K562 (cell line): ENCODE measurements at regions of chr1 and their contacts with region 1.

Region 1: DNA sequence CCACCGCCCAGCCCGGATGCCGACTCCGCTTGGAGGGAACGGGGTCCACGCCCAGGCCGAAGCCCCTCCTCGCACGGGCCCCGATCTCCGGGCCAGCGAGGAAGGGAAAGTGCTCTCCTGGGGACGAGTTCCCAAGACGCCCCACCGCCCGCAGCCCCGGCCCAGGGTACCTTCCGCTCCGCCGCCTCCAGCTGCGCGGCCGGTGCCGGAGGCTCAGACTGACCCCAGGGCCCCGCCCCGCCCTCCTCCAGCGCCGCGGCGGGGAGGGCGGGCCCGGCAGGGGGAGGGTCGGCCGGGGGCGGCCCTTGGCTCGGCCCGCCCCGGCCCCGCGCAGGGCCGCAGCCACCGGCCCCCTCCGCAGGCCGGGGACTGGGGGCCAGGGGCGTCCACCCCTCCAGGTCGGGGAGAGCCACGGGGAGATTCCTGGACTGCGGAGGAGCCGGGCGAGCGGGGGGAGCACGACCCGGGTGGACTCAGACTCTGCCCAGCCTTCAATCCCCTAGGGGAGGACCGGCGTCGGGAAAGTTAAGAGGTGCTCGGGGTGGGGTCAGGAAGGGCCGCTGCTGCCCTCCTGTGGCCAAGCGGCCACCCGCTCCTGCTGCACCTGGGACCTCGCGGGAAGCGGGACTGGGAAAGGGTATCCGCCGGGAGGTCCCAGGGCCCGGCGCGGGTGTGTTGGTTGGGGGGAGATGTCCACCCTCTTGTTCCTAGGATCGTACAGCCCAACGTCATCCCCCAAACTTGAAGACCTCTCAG is at the start of gene RHOC:
- DNase-seq: peak; percentile 90 to 96 (median 94)
- ATAC-seq: peak; percentile 83
- H3K4me3 ChIP-seq: peak within 1 kb of the TSS; percentile 94
- H3K27ac ChIP-seq: peak within 1 kb of the TSS; percentile 97
- H3K4me1 ChIP-seq: peaks cover 44 to 47% of the 10 kb centered on the region in 2 experiments
- H3K27me3 ChIP-seq: no peaks in the 10 kb centered on the region
- CTCF ChIP-seq: peak; percentile 96 to 97 (median 96)
- EP300 ChIP-seq: peak; percentile 29; the same call in 1 of the 2 replicates
- POLR2A ChIP-seq: peak; percentile 76
- RAD21 ChIP-seq: peak; percentile 98 to 99
- polyA plus RNA-seq, gene RHOC: 35.2 to 82.7 TPM

Region 2: GRCh38 chr1:112466078-112466660 is 240.9 kb before region 1 on chr1:
- CTCF ChIA-PET with region 1: no interaction called
- POLR2A ChIA-PET with region 1: no interaction called
- in situ Hi-C with region 1: no loop called
- intact Hi-C with region 1: loop called (anchors 10 kb)
- DNase-seq: peak; percentile 85 to 94 (median 92)
- ATAC-seq: peak; percentile 90
- H3K4me3 ChIP-seq: no peak overlapping the region
- H3K27ac ChIP-seq: no peak overlapping the region
- H3K4me1 ChIP-seq: peaks cover 14 to 21% of the 10 kb centered on the region in 2 experiments
- H3K27me3 ChIP-seq: peaks cover 7 to 8% of the 10 kb centered on the region in 2 experiments
- CTCF ChIP-seq: peak; percentile 93 to 97 (median 94)
- EP300 ChIP-seq: 0 out of 2 replicates have a peak, but pooled peaks have one; percentile 8
- POLR2A ChIP-seq: no peak
- RAD21 ChIP-seq: peak; percentile 95 to 96

Region 3: DNA sequence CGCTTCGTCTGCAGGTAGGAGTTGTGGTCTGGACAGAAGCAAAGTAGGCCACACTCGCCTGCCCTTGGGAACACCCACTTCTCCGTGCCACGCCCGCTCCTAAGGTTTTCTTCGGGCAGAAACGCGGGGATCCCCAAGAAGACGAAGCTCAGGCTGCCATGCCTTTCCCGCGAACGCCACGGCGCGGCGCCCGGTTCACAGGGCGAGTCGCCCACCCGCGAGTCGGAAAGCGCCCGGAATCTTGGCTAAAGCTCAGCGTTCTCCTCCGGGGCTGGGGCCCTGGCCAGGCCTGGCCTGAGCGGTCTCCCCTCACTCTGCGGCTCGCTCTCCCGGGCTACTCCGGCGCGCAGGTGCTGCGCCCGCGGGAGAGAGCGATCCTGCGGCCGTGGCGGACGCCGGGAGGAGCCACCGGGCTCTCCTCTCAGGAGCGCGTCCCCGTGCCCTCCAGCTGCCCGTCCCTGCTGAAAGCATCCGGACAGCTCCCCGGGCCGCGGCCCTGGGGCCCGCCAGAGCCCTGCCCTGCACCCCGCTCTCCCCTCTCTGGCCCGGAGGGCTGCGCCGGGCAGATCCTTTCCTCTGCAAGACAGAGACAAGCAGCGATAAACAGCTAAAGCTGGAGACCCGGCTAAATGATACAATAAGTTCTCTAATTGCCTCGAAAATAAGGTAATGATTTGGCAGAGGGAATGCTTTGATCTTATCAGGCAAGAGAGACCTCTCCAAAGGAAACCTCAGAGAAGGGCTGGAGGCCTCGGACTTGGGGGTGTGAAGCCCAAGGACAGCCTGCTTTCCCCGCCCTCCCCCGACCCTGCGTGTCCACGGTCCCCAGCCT is 205.1 kb before region 1 on chr1:
- CTCF ChIA-PET with region 1: interaction called, 4 read pairs
- POLR2A ChIA-PET with region 1: interaction called, 6 read pairs
- in situ Hi-C with region 1: loop called (anchors 5 kb)
- intact Hi-C with region 1: loop called (anchors 1 kb)
- DNase-seq: peak; percentile 57 to 70 (median 60)
- ATAC-seq: peak; percentile 76
- H3K4me3 ChIP-seq: peak overlapping the region; percentile 35
- H3K27ac ChIP-seq: no peak overlapping the region
- H3K4me1 ChIP-seq: peaks cover 0 to 16% of the 10 kb centered on the region in 2 experiments; a peak in 2 of 5 replicates
- H3K27me3 ChIP-seq: peaks cover 36 to 73% of the 10 kb centered on the region in 2 experiments
- CTCF ChIP-seq: peak; percentile 68 to 76 (median 76)
- EP300 ChIP-seq: no peak
- POLR2A ChIP-seq: no peak
- RAD21 ChIP-seq: peak; percentile 56 to 84

Region 4: DNA sequence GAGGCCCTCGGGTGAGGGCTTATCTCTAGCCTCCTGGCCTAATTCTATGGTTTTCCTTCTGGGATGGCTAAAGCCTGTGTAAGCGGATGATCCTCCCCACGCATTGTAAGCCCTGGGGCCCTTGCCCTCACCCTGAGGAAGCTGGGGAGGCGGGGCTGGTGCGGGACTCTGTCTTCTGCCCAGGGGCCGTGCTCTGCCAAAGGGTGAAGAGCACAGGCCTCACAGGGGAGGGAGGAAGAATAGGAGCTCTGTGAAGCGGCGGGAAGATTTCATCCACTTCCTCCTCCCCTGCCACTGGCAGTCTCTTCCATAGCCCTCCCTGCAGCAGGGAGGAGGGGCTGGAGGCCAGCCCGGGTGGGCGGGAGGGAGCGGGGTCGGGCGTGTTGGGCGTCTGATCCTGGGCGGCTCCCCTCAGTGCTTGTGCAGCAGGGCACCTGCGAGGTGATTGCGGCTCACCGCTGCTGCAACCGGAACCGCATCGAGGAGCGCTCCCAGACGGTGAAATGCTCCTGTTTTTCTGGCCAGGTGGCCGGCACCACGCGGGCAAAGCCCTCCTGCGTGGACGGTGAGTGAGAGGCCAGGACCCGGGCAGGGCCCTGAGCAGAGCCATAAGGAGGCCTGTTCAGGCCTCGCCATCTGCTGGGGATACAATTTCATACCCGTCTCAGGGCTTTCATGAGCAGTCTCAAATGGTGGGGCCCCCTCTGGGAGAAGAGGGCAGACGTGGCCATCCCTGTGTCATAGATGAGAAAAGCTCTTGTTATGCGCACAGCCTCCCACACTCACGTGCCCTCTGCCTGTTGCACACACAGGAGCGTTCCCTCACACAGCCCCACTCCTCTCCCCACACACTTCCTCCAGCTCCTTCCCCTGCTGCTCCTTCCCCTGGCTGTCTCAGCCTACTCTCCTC is 15.8 kb after region 1 on chr1:
- CTCF ChIA-PET with region 1: no interaction called
- POLR2A ChIA-PET with region 1: no interaction called
- in situ Hi-C with region 1: no loop called
- intact Hi-C with region 1: no loop called
- DNase-seq: no peak
- ATAC-seq: peak; percentile 45
- H3K4me3 ChIP-seq: no peak overlapping the region
- H3K27ac ChIP-seq: no peak overlapping the region
- H3K4me1 ChIP-seq: peaks cover 0 to 20% of the 10 kb centered on the region in 2 experiments; a peak in 4 of 5 replicates
- H3K27me3 ChIP-seq: peaks cover 11 to 51% of the 10 kb centered on the region in 2 experiments; a peak in 4 of 5 replicates
- CTCF ChIP-seq: peak in 1 of 3 experiments; percentile 2; a peak in 1 of 6 replicates
- EP300 ChIP-seq: no peak
- POLR2A ChIP-seq: no peak
- RAD21 ChIP-seq: no peak